ENCODE measurements at regions of chr2 and their contacts with region 1.

Region 1: DNA sequence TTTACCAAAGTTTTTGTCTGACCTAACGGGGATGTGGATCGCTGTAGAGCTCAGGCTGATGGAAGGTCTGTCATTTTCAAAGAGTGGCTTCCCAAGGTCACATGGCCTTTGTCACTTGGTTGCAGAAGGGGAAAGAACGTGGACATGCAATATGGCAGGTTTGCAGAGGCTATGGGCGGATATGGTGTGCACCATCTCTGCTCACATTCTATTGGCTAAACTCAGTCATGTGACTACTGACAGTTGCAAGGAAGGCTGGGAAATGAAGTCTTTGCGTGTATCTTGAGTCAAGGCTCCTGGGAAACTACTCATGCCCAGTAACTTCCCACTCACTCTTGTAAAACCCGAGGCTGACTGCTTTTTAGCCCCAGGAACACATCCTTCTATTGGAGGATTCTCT is 96.8 kb downstream of the ST6GAL2 start:
- DNase-seq: no peak

Region 2: DNA sequence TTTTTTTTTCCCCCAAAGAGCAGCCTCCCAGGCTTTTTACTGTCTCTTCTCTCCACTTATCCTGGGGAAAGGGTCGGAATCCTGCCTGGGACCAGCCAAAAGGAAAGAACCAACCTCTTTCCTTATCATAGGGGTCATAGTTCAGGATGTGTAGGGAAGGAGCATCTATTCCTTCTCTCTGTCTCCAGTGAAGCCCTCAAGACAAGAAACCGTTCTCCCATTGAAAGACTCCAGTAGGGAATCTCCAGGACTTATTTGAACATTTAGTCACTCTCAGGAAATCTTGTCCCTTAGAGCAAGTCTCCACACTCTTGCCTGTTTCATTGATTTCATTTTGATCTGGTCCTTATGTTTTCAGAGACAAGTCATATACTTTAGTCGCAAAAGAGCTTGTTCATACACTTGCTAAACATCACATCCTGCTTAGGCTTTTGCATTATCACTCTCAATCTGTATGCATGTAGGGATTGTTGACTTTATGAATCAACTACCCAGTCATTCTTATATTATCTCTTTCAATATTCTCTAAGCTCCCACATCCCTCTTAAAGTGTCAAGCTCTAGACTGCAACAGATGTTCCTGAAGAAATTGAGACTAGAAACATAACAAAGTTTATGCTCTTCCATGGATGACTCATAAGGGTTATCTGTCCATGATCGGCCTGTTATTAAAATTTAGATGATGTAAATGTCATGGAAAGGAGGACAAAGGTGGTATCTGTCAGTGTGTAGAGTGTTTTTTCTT is 212.9 kb after region 1 on chr2:
- intact Hi-C with region 1: loop called in 1 of 2 experiments (anchors 5 kb)
- DNase-seq: no peak

Region 3: DNA sequence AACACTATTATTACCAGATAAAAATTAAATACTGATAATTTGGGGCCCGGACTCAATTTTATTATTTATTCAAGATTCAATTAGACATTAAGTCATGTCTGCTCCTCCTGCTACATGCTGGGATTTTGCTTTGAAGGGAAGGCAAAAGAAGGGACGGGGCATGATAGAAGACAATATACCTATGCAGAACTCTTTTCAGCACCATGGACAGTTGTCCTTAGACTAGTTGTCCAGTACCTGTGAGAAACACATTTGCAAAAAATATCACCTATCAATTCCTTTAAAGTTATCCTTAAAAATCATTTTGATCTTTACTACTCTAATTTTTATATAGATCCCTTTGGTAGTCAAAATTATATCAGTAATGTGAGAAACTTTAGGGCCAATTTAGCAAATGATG is 1350.3 kb after region 1 on chr2:
- intact Hi-C with region 1: no loop called
- DNase-seq: no peak

Measured in posterior vena cava (tissue), 2 donors.